Heart right ventricle (tissue), 16 donors: ENCODE measurements at regions of chr1 and their contacts with region 1.

Region 1: GRCh38 chr1:94237291-94238226 is at the start of gene ARHGAP29:
- DNase-seq: peak; percentile 87 to 90
- ATAC-seq: peak; percentile 93 to 99 (median 96)
- H3K4me3 ChIP-seq: peak within 1 kb of the TSS; percentile 75 to 100 (median 92)
- H3K27ac ChIP-seq: peak within 1 kb of the TSS; percentile 94 to 99 (median 98)
- H3K4me1 ChIP-seq: peaks cover 0 to 66% (median 30%) of the 10 kb centered on the region in 9 donors
- H3K27me3 ChIP-seq: peaks cover 0 to 86% (median 0%) of the 10 kb centered on the region in 7 donors
- CTCF ChIP-seq: peak in 2 of 9 donors; percentile 19 to 23
- total RNA-seq, gene ARHGAP29: 20.9 to 34.3 (median 28.8) TPM

Region 2: DNA sequence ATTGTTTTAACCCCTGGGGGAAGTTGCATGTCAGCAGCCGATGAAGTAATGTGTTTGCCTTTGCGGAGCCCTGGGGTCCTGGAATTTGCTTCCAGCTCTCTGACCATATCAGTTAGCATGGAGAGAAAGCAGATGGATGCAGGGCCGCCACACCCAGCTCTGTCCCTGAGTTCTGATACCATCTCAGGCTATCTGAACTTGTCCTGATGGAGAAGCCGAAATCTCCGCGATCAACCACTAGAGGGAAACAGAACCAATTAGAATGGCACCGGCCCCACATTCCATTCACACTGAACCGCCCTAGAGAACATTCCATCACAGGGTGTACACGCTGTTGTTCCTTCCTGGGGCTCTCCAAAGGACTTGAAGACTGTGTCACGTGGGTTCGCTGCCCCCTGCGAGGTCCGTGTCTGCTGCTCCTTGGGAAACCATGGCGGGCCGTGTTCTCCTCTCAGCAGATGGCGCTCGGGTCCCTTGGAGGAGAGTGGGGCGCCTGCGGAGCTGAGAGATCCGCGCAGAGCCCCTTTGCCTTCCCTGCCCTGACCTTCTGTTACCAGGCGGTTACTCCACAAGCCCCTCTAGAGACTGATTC is 192.0 kb before region 1 on chr1:
- intact Hi-C with region 1: loop called in 4 of 10 experiments (anchors 1 to 5 kb)
- DNase-seq: peak; percentile 88 to 94
- ATAC-seq: peak; percentile 88 to 95 (median 92)
- H3K4me3 ChIP-seq: peak overlapping the region in 5 of 10 donors; percentile 8 to 21 (median 12)
- H3K27ac ChIP-seq: peak overlapping the region; percentile 81 to 98 (median 92)
- H3K4me1 ChIP-seq: peaks cover 23 to 85% (median 64%) of the 10 kb centered on the region in 9 donors
- H3K27me3 ChIP-seq: no peaks in the 10 kb centered on the region
- CTCF ChIP-seq: peak; percentile 50 to 89 (median 73)

Region 3: DNA sequence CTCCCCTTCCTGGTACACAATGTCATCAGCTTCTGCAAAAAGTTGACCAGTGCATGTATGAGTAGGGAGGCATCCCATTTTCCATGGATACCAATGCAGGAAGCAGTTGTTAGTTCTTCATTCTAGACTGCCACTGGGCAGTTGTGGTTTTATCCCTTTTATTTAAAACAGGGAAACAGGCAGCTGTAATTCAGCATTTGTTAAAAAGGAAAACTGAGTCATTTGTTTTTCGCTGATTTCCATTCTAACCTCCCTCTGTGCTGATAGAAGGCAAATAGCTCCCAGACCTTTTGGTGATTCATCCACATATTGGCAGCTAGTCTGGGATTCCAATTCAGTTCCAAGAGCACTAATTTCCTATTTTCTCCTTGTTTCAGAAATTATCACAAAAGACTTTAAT is 95.5 kb before region 1 on chr1:
- intact Hi-C with region 1: no loop called
- DNase-seq: no peak
- ATAC-seq: peak in 6 of 8 donors; percentile 46 to 81 (median 59)
- H3K4me3 ChIP-seq: no peak overlapping the region
- H3K27ac ChIP-seq: peak overlapping the region in 5 of 10 donors; percentile 0 to 61 (median 43)
- H3K4me1 ChIP-seq: peaks cover 0 to 15% (median 5%) of the 10 kb centered on the region in 9 donors
- H3K27me3 ChIP-seq: no peaks in the 10 kb centered on the region
- CTCF ChIP-seq: no peak

Region 4: GRCh38 chr1:94199398-94199797 is 38.2 kb before region 1 on chr1:
- intact Hi-C with region 1: loop called in 1 of 10 experiments (anchors 5 kb)
- DNase-seq: no peak
- ATAC-seq: no peak
- H3K4me3 ChIP-seq: no peak overlapping the region
- H3K27ac ChIP-seq: peak overlapping the region in 2 of 10 donors; percentile 46 to 66
- H3K4me1 ChIP-seq: peaks cover 0 to 52% (median 12%) of the 10 kb centered on the region in 9 donors
- H3K27me3 ChIP-seq: peaks cover 0 to 4% (median 0%) of the 10 kb centered on the region in 7 donors
- CTCF ChIP-seq: no peak

Region 5: DNA sequence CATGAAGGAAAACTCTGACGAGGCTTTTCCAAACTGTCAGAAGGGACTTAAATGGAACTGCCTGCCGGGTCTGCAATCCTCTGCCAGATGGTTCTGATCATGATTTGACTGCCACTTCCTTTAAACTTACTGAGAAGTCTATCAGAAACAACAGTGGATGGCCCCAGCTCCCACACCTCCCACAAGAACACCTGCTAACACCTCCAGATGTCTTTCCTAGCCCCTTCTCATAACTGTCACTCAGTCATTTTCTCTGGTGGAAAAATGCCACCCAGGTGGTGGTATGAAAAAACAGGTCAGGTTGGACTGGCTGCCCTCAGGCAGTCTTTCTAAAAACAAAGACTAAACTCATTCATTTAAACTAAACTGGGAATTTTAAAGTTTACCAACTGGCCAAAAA is 113.9 kb after region 1 on chr1:
- intact Hi-C with region 1: no loop called
- DNase-seq: no peak
- ATAC-seq: no peak
- H3K4me3 ChIP-seq: no peak overlapping the region
- H3K27ac ChIP-seq: no peak overlapping the region
- H3K4me1 ChIP-seq: peaks cover 0 to 9% (median 0%) of the 10 kb centered on the region in 9 donors
- H3K27me3 ChIP-seq: peaks cover 0 to 3% (median 0%) of the 10 kb centered on the region in 7 donors
- CTCF ChIP-seq: no peak

Region 6: GRCh38 chr1:94486990-94487389 is 249.4 kb after region 1 on chr1:
- intact Hi-C with region 1: no loop called
- DNase-seq: no peak
- ATAC-seq: no peak
- H3K4me3 ChIP-seq: no peak overlapping the region
- H3K27ac ChIP-seq: no peak overlapping the region
- H3K4me1 ChIP-seq: peaks cover 0 to 7% (median 0%) of the 10 kb centered on the region in 9 donors
- H3K27me3 ChIP-seq: no peaks in the 10 kb centered on the region
- CTCF ChIP-seq: no peak

Region 7: GRCh38 chr1:94544706-94545490 is 307.3 kb after region 1 on chr1:
- intact Hi-C with region 1: no loop called
- DNase-seq: no peak
- ATAC-seq: no peak
- H3K4me3 ChIP-seq: peak overlapping the region in 4 of 10 donors; percentile 2 to 78 (median 40)
- H3K27ac ChIP-seq: peak overlapping the region in 9 of 10 donors; percentile 30 to 95 (median 91)
- H3K4me1 ChIP-seq: peaks cover 0 to 47% (median 32%) of the 10 kb centered on the region in 9 donors
- H3K27me3 ChIP-seq: peaks cover 0 to 12% (median 0%) of the 10 kb centered on the region in 7 donors
- CTCF ChIP-seq: no peak